Cardiac septum (tissue), 1 donor: ENCODE measurements at regions of chr1 and their contacts with region 1.

Region 1: DNA sequence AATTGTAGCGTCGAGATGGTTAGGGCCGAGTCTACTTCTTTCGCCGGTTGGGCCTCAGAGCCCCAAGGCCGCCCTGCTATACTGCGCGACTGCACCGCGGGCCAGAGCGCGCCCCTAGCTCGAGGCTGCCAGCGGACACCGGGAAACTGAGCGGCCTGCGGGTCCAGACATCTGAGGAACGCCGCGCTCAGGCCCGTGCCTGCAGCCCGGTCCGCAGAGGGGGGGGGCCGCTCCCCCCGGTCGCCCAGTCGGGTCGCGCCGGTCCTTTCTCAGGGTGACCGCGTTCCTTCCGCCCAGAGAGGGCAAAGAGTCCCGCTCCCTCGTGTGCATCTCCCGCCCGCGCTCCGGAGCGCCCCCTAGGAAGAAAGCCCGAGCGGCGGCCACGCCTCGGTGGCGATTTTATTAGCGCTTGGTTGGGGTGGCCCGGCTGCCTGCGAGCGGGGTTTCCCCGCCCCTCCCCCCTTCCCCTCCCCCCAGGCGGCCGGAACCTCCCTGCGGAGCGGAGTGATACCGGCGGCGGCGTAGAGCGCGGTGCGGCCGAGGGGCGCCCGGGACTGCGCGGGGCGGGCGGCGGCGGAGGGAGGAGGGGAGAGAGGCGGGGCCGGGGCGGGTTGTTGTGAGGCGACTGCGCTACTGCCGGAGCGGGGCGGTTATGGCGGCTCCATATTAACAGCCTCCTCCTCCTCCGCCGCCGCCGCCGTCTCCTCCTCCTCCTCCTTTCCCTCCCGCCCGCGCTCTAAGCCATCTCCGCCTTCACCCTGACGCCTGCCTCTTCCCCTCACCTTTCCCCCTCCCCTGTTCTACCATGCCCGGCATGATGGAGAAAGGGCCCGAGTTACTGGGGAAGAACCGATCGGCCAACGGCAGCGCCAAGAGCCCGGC is at the start of gene RCOR3:
- DNase-seq: peak; percentile 96
- total RNA-seq, gene RCOR3: 58.2 TPM

Region 2: GRCh38 chr1:210645582-210646257 is 613.3 kb before region 1 on chr1:
- intact Hi-C with region 1: no loop called
- DNase-seq: no peak

Region 3: DNA sequence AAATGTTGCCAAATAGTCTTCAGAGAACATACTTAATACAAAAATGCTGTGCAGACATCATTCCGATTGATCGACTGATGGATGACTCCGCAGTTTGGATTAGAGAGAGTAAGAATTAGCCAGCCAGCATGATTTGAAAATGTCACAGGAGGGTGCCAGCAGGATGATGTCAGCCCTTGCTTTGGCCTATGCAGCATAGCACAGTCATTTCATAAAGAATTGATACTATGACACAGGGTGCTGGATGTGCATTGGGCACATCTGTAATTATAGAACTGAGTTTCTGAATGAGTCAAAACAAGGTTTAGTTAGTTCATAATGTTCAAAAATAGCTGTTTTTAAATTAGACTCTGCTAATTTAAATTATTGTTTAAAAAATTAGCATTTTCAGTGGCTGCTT is 46.0 kb after region 1 on chr1:
- intact Hi-C with region 1: loop called (anchors 5 kb)
- DNase-seq: no peak

Region 4: DNA sequence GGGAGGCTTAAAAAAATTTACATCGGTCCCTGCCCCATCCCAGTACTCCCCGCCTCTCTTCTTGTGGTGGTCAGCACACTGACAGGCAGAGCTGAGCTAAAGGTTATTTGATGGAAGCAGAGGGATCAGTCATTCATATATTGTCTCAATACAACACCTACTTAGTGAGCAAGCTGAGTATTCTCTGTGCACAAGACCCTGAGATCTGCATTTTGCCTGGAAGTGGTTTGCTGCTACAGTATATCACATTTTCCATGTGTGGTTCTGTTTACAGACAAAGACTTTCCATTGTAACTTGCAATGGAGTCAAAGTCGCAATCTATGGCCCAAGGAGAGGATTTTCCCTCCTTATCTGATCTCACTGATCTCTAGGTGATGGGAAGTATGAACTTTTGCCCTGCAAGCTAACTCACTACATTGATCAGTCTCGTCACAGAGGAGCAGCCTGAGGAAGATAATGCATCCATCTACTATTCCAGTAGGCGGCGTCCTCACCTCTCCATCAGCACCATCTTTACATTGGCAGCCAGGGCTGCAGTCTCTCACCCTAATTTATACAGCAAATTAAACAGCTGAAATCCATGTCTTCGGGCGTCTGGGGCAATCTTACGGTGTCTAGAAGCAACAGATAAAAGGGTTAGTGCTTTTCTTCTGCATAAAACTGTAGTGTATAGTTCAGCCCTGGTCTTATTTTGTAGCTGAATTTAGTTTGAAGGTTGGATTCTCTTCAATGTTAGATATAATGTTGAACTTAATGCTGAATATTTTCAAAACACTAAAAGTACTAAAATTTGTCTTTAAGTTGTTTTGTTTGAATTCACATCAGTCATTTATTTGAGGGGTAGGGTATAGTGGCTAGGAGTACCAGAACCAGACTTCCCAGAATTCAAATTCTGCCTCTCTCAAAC is 64.4 kb after region 1 on chr1:
- intact Hi-C with region 1: no loop called
- DNase-seq: no peak

Region 5: GRCh38 chr1:211359876-211360275 is 100.9 kb after region 1 on chr1:
- intact Hi-C with region 1: no loop called
- DNase-seq: no peak

Region 6: GRCh38 chr1:211382714-211383480 is 123.9 kb after region 1 on chr1:
- intact Hi-C with region 1: loop called (anchors 2 kb)
- DNase-seq: peak; percentile 99